Astrocyte of the cerebellum (primary cell): ENCODE measurements at regions of chr9 and their contacts with region 1.

Region 1: DNA sequence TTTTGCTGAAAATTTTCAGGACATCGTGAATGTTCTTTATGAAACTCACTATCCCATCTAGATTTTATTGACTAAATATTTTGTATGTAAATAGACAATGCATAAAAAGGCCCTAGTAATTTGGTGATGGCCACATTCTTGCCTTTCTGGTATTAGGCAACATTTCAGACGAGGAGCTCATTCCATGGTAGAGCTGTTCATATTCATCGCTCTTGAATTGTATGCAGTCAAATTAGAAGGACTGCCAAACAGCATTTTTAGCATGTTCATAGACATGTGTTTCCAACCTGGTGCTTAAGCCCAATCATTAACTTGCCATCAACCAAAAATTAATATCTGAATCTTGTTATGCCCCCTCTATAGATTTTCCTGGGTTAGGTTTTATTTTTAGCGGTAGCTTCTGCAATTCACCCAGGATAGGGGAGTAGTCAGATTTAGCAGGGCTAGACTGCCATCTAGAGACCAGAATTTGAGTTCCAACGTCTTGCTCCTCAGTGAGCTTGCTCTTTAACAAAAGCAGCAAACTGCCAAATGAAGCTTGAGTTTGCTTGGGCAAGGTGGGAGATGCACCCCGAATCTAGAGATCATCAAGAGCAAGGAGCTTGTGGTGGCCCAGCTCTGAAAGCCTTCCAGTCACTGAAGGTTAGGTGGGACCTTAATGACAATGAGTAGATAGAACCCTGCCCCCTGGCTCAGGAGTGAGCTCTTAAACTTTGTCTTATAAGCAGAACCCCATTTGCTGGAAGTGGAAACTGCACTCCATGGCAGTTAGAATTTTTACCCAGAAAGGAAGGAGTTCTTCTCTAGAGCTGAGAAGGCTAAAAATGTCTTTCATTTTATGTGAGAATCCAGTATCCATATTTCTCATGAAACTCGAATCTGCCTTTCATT is 456.2 kb downstream of the RASEF start:
- DNase-seq: peak; percentile 77
- H3K4me3 ChIP-seq: no peak overlapping the region
- CTCF ChIP-seq: peak; percentile 67

Region 2: DNA sequence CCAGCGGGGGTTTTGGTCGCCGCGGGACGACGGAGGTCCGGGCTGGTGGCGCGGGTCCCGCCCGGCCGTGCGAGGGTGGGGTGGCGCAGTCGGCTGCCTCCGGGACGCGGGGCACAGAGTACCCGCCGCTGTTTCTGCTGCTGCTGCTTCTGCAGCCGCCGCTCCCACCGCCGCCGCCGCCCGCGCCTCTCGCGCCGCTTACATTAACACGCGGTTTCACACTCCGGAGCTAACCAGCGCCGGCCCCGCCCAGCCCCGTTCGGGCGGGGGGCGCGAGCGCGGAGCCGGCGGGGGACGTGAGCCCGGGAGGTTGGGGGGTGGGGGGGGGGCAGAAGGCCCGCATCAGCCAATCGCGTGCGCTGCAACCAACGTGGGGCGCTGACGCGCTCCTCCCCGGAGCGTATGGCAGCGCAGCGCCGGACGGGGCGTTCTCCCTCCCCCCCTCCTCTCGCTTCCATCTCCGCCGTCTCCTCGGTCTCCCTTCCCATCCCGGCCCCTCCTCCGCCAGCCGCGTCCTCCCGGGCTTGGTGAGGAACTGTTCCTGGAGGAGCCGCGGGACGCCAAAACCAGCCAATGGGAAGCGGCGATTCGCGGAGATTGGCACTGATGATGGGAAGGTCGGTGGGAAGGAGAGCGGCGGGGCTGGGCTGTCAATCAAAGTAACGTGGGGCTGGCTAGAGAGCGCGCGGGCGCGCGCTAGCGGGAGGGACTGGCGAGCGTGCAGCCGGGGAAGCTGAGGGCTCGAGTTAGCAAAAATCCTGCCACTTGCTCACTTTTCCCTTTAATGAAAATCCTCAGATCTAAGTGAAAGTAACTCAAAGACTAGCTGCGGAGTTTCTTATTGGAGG is 917.2 kb before region 1 on chr9 and contains the start of gene TLE1:
- in situ Hi-C with region 1: loop called (anchors 25 kb)
- DNase-seq: peak; percentile 99
- H3K4me3 ChIP-seq: peak within 1 kb of the TSS; percentile 96
- CTCF ChIP-seq: no peak

Region 3: GRCh38 chr9:81848472-81848871 is 758.3 kb before region 1 on chr9:
- in situ Hi-C with region 1: loop called (anchors 25 kb)
- DNase-seq: no peak
- H3K4me3 ChIP-seq: no peak overlapping the region
- CTCF ChIP-seq: peak; percentile 41